Activated T-helper 2 cell treated with anti-CD3 and anti-CD28 coated beads, Interferon-gamma antibody, Interleukin-2, Interleukin-4, amounts not matched to agents 10 μg/mL and 5 μg/mL and 100 μg/mL, durations not matched to agents 14 hours and 24 hours and 36 hours (primary cell): ENCODE measurements at regions of chrX and their contacts with region 1.

Region 1: GRCh38 chrX:14029425-14030173 is at the start of gene GEMIN8:
- DNase-seq: peak; percentile 79
- H3K4me3 Mint-ChIP-seq: peak within 1 kb of the TSS; percentile 98
- H3K27ac Mint-ChIP-seq: peak within 1 kb of the TSS; percentile 98
- H3K4me1 Mint-ChIP-seq: peaks cover 22% of the 10 kb centered on the region
- H3K27me3 Mint-ChIP-seq: peaks cover 4% of the 10 kb centered on the region
- total RNA-seq, gene GEMIN8: 12.6 and 14.0 TPM in 2 replicates

Region 2: GRCh38 chrX:13506574-13506973 is 523.0 kb before region 1 on chrX:
- intact Hi-C with region 1: loop called (anchors 1 kb)
- DNase-seq: peak; percentile 10
- H3K4me3 Mint-ChIP-seq: no peak overlapping the region
- H3K27ac Mint-ChIP-seq: no peak overlapping the region
- H3K4me1 Mint-ChIP-seq: peaks cover 6% of the 10 kb centered on the region
- H3K27me3 Mint-ChIP-seq: no peaks in the 10 kb centered on the region

Region 3: GRCh38 chrX:13658602-13659001 is 371.0 kb before region 1 on chrX:
- intact Hi-C with region 1: loop called (anchors 1 kb)
- DNase-seq: no peak
- H3K4me3 Mint-ChIP-seq: no peak overlapping the region
- H3K27ac Mint-ChIP-seq: no peak overlapping the region
- H3K4me1 Mint-ChIP-seq: peaks cover 19% of the 10 kb centered on the region
- H3K27me3 Mint-ChIP-seq: no peaks in the 10 kb centered on the region

Region 4: GRCh38 chrX:13816643-13817627 is 212.7 kb before region 1 on chrX and contains the start of gene GPM6B:
- intact Hi-C with region 1: no loop called
- DNase-seq: no peak
- H3K4me3 Mint-ChIP-seq: no peak within 1 kb of the TSS
- H3K27ac Mint-ChIP-seq: no peak within 1 kb of the TSS
- H3K4me1 Mint-ChIP-seq: no peaks in the 10 kb centered on the region
- H3K27me3 Mint-ChIP-seq: peaks cover 16% of the 10 kb centered on the region
- total RNA-seq, gene GPM6B: not detected in 2 replicates

Region 5: DNA sequence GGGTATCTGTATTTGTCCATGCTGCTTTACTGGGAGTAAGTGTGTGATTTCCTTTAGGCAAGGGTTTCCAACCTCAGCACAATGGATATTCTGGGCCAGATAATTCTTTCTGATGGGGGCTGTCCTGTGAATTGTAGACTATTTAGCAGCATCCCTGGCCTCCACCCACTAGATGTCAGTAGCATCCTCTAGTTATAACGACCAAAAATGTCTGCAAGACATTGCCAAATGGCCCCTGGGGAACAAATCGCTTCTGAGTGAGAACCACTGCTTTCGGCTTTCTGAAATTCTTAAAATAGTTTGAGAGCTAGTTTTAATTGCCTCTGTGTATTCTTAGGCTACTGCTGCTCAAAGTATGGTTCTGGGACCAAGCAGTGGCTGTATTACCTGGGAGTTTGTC is 131.5 kb before region 1 on chrX:
- intact Hi-C with region 1: loop called (anchors 1 kb)
- DNase-seq: no peak
- H3K4me3 Mint-ChIP-seq: no peak overlapping the region
- H3K27ac Mint-ChIP-seq: no peak overlapping the region
- H3K4me1 Mint-ChIP-seq: no peaks in the 10 kb centered on the region
- H3K27me3 Mint-ChIP-seq: no peaks in the 10 kb centered on the region

Region 6: GRCh38 chrX:15202454-15203143 is 1173.0 kb after region 1 on chrX:
- intact Hi-C with region 1: loop called (anchors 5 kb)
- DNase-seq: no peak
- H3K4me3 Mint-ChIP-seq: no peak overlapping the region
- H3K27ac Mint-ChIP-seq: no peak overlapping the region
- H3K4me1 Mint-ChIP-seq: peaks cover 30% of the 10 kb centered on the region
- H3K27me3 Mint-ChIP-seq: peaks cover 9% of the 10 kb centered on the region